Panc1 (cell line): ENCODE measurements at regions of chr7 and their contacts with region 1.

Region 1: GRCh38 chr7:94511745-94512144 is 2.1 kb downstream of the CASD1 start:
- DNase-seq: no peak
- ATAC-seq: no peak
- H3K4me3 ChIP-seq: no peak overlapping the region
- H3K27ac ChIP-seq: no peak overlapping the region
- H3K4me1 ChIP-seq: peaks cover 28% of the 10 kb centered on the region
- H3K27me3 ChIP-seq: no peaks in the 10 kb centered on the region
- CTCF ChIP-seq: no peak

Region 2: GRCh38 chr7:94239661-94240234 is 272.0 kb before region 1 on chr7:
- CTCF ChIA-PET with region 1: no interaction called
- POLR2A ChIA-PET with region 1: no interaction called
- in situ Hi-C with region 1: no loop called
- intact Hi-C with region 1: no loop called
- DNase-seq: no peak
- ATAC-seq: no peak
- H3K4me3 ChIP-seq: no peak overlapping the region
- H3K27ac ChIP-seq: no peak overlapping the region
- H3K4me1 ChIP-seq: no peaks in the 10 kb centered on the region
- H3K27me3 ChIP-seq: no peaks in the 10 kb centered on the region
- CTCF ChIP-seq: no peak

Region 3: GRCh38 chr7:94529516-94529915 is 17.8 kb after region 1 on chr7:
- CTCF ChIA-PET with region 1: no interaction called
- POLR2A ChIA-PET with region 1: no interaction called
- in situ Hi-C with region 1: no loop called
- intact Hi-C with region 1: no loop called
- DNase-seq: no peak
- ATAC-seq: no peak
- H3K4me3 ChIP-seq: no peak overlapping the region
- H3K27ac ChIP-seq: no peak overlapping the region
- H3K4me1 ChIP-seq: no peaks in the 10 kb centered on the region
- H3K27me3 ChIP-seq: no peaks in the 10 kb centered on the region
- CTCF ChIP-seq: no peak

Region 4: GRCh38 chr7:94561841-94562514 is 50.2 kb after region 1 on chr7:
- CTCF ChIA-PET with region 1: interaction called, 10 read pairs
- POLR2A ChIA-PET with region 1: no interaction called
- in situ Hi-C with region 1: no loop called
- intact Hi-C with region 1: no loop called
- DNase-seq: no peak
- ATAC-seq: no peak
- H3K4me3 ChIP-seq: no peak overlapping the region
- H3K27ac ChIP-seq: no peak overlapping the region
- H3K4me1 ChIP-seq: no peaks in the 10 kb centered on the region
- H3K27me3 ChIP-seq: no peaks in the 10 kb centered on the region
- CTCF ChIP-seq: no peak

Region 5: DNA sequence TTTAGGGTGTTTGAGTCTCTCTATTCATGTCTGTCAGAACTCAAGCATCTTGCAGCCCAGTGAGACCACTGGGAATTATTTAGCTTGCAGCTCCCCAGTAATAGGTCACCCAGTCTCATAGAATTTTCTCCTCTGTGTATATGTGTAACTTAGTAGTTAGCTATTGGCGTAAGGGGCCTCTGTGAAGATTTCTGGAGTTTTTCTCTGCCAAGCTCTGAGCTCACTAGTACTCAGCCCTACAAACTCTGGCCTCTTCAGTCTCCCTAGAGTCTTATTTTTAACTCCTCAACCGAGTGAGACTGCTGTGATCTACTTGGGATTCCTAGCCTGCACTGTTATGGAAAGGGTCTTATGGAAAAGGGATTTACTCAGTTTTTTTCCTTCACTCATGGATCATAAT is 485.8 kb after region 1 on chr7:
- CTCF ChIA-PET with region 1: no interaction called
- POLR2A ChIA-PET with region 1: interaction called, 11 read pairs
- in situ Hi-C with region 1: no loop called
- intact Hi-C with region 1: no loop called
- DNase-seq: no peak
- ATAC-seq: no peak
- H3K4me3 ChIP-seq: no peak overlapping the region
- H3K27ac ChIP-seq: no peak overlapping the region
- H3K4me1 ChIP-seq: no peaks in the 10 kb centered on the region
- H3K27me3 ChIP-seq: no peaks in the 10 kb centered on the region
- CTCF ChIP-seq: no peak